PC-9 (cell line): ENCODE measurements at regions of chr5 and their contacts with region 1.

Region 1: GRCh38 chr5:126656396-126657007 is 55.8 kb downstream of the PHAX start:
- DNase-seq: peak in 1 of 2 experiments; percentile 42
- H3K4me3 ChIP-seq: no peak overlapping the region
- H3K27ac ChIP-seq: no peak overlapping the region
- H3K4me1 ChIP-seq: no peaks in the 10 kb centered on the region
- H3K27me3 ChIP-seq: no peaks in the 10 kb centered on the region
- CTCF ChIP-seq: peak; percentile 84

Region 2: GRCh38 chr5:126641387-126641786 is 15.1 kb before region 1 on chr5:
- CTCF ChIA-PET with region 1: no interaction called
- POLR2A ChIA-PET with region 1: no interaction called
- intact Hi-C with region 1: no loop called
- DNase-seq: no peak
- H3K4me3 ChIP-seq: no peak overlapping the region
- H3K27ac ChIP-seq: no peak overlapping the region
- H3K4me1 ChIP-seq: no peaks in the 10 kb centered on the region
- H3K27me3 ChIP-seq: no peaks in the 10 kb centered on the region
- CTCF ChIP-seq: no peak

Region 3: GRCh38 chr5:126801992-126802294 is 145.4 kb after region 1 on chr5:
- CTCF ChIA-PET with region 1: no interaction called
- POLR2A ChIA-PET with region 1: no interaction called
- intact Hi-C with region 1: loop called (anchors 5 kb)
- DNase-seq: no peak
- H3K4me3 ChIP-seq: no peak overlapping the region
- H3K27ac ChIP-seq: no peak overlapping the region
- H3K4me1 ChIP-seq: no peaks in the 10 kb centered on the region
- H3K27me3 ChIP-seq: no peaks in the 10 kb centered on the region
- CTCF ChIP-seq: peak; percentile 43

Region 4: GRCh38 chr5:127492854-127493738 is 836.6 kb after region 1 on chr5:
- CTCF ChIA-PET with region 1: no interaction called
- POLR2A ChIA-PET with region 1: no interaction called
- intact Hi-C with region 1: loop called (anchors 10 kb)
- DNase-seq: peak in 1 of 2 experiments; percentile 37
- H3K4me3 ChIP-seq: no peak overlapping the region
- H3K27ac ChIP-seq: no peak overlapping the region
- H3K4me1 ChIP-seq: no peaks in the 10 kb centered on the region
- H3K27me3 ChIP-seq: no peaks in the 10 kb centered on the region
- CTCF ChIP-seq: peak; percentile 98